Activated CD8-positive, alpha-beta T cell treated with anti-CD3 and anti-CD28 coated beads for 36 hours (primary cell): ENCODE measurements at regions of chrX and their contacts with region 1.

Region 1: DNA sequence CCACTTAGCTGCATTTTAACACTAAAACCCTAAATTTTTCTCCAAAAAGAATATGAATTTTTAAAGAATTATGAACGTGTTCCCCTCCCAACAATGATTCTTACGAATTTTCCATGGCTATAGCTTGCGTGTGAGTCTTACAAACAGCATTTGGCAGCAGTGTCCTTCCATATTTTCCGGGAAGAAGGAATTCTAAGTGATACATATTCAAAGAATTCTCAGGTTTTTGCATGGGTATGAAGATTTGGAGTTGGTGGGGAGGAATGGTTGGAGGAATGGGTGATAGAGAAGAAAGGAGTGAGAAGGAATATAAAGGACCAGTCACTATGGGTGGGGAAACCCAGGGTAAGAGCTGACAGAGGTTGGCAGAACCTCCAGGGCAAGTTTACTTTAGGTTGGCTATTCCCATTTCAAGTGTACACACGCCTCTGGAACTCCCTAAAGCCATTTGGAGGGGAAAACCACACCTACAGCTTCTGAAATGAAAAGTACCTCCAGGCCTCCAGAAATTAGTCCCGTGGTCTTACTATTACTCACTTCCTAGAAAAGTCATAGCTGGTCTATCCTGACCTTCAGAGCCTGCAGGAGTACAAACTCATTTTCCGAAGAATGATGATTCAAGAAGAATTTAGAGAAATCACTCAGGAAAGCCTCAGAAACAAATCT is 420.8 kb upstream of the DIPK2B start:
- DNase-seq: peak; percentile 7
- ATAC-seq: peak; percentile 80
- H3K4me3 Mint-ChIP-seq: no peak overlapping the region
- H3K27ac Mint-ChIP-seq: no peak overlapping the region
- H3K4me1 Mint-ChIP-seq: peaks cover 17% of the 10 kb centered on the region
- H3K27me3 Mint-ChIP-seq: no peaks in the 10 kb centered on the region
- CTCF ChIP-seq: no peak

Region 2: DNA sequence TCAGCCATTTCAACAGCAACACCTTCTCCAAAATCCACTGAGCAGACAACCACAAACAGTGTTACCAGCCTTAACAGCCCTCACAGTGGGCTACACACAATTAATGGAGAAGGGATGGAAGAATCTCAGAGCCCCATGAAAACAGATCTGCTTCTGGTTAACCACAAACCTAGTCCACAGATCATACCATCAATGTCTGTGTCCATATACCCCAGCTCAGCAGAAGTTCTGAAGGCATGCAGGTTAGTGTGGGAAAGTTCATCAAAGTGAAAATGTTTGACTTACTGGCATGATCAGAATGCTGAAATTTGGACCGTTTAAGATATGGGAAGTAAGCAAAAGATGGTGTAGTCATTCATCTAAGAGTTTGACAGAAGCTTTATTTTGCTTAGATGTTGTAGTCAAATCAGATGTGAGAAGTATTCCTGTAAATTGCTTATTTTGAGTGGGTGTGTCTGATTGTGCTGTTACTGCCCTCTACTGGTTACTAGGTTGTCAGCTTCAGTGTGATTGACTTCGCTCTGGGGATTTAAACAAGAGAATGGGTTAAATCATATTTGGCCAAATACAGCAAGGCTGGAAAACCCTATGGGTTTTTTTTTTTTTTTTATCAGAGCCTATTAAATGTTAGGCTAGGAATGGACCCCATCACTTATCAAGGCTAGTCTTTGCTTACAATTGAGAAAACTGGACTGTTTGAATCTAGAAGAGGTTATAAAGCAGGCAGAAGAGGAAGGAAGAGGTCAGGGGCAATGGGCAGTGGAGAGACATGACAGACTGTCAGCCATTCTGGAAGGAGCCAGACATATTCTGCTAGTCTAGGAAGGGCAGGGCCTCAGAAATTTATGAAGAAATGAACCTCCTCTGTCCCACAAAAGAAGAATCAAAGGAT is 551.1 kb before region 1 on chrX:
- CTCF ChIA-PET with region 1: no interaction called
- POLR2A ChIA-PET with region 1: no interaction called
- intact Hi-C with region 1: no loop called
- DNase-seq: peak; percentile 20
- ATAC-seq: peak; percentile 64
- H3K4me3 Mint-ChIP-seq: no peak overlapping the region
- H3K27ac Mint-ChIP-seq: peak overlapping the region; percentile 44
- H3K4me1 Mint-ChIP-seq: peaks cover 52% of the 10 kb centered on the region
- H3K27me3 Mint-ChIP-seq: no peaks in the 10 kb centered on the region
- CTCF ChIP-seq: peak; percentile 49

Region 3: GRCh38 chrX:45497290-45497689 is 124.2 kb before region 1 on chrX:
- CTCF ChIA-PET with region 1: no interaction called
- POLR2A ChIA-PET with region 1: no interaction called
- intact Hi-C with region 1: no loop called
- DNase-seq: no peak
- ATAC-seq: peak; percentile 27
- H3K4me3 Mint-ChIP-seq: no peak overlapping the region
- H3K27ac Mint-ChIP-seq: no peak overlapping the region
- H3K4me1 Mint-ChIP-seq: no peaks in the 10 kb centered on the region
- H3K27me3 Mint-ChIP-seq: peaks cover 3% of the 10 kb centered on the region
- CTCF ChIP-seq: no peak

Region 4: DNA sequence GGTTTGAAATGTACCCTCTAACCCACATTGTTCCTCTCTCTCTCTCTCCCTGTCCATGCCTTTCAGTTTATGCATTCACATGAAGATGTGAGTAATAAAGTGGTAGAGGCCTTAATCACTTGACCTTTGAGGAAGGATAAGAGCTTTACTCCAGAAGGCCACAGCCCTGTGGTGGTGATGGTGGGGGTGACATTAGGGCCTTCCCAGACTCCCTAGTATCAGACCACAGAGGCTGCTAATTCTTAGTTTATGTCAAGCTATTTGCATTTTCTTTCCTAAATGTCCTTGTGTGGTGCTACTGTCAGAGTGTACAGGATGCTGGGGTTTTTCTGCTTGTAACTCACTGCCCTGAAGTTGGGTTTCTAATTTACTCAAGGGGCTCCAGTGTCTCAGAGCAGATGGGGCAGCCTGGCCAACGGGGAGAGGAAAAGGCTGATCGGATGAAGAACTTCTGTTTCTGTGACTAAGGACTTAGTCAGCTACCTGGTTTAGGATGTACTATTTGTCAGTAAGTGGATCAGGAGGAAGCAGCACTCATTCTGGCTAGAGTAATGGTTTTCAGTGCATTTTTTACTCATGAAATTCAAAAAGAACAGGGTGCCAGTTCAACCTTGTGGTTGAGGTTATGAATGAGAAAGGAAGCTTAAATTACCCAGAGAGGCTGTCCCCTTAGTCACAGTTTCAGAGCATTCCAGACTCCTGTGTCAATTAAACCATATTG is 88.7 kb after region 1 on chrX:
- CTCF ChIA-PET with region 1: no interaction called
- POLR2A ChIA-PET with region 1: interaction called, 3 read pairs
- intact Hi-C with region 1: loop called (anchors 2 kb)
- DNase-seq: peak; percentile 80
- ATAC-seq: peak; percentile 91
- H3K4me3 Mint-ChIP-seq: no peak overlapping the region
- H3K27ac Mint-ChIP-seq: peak overlapping the region; percentile 80
- H3K4me1 Mint-ChIP-seq: peaks cover 59% of the 10 kb centered on the region
- H3K27me3 Mint-ChIP-seq: no peaks in the 10 kb centered on the region
- CTCF ChIP-seq: no peak